ENCODE measurements at regions of chr3 and their contacts with region 1.

Region 1: DNA sequence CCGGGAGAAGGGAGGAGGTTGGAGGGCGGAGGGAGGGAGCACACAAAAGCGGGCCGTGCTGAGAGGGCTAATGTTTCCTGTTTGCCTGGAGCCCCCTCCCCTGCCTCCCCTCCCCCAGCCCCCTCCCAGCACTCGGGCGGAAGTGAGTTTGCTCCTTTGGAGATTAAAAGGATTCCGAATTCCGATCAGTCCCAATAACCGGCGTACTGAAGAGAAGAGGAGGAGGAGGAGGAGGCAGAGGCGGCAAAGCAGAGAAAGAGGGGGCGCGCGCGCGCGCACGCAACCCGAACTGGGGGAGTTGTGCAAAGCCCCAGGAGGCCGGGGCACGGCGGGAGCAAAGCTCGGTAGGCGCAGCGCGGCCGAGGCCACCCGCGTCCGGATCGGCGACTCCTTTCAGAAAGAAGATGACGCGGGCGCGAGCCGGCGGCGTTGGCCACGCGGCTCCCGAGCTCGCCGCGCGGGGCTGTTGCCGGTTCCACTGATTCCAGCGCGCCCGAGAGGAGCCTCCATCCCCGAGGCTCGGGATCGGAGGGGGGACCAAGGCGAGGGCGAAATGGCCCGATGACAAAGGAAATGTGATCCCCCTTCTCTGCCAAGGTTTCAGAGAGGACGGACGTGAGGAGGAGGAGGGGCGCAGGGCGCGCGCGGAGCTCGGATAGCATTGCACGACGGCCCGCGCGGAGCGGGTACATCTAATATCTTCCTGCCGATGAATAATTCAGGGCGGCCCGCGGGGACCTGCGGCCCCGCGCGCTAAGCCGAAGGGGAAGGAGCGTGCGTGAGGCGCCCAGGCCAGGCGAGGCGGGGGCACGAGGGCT is 1.1 kb upstream of the TRIM71 start:
- DNase-seq: peak; percentile 95
- ATAC-seq: peak; percentile 76
- H3K4me3 ChIP-seq: peak overlapping the region; percentile 94 to 98 (median 94)
- H3K27ac ChIP-seq: peak overlapping the region; percentile 99
- H3K4me1 ChIP-seq: peaks cover 35% of the 10 kb centered on the region
- H3K27me3 ChIP-seq: peaks cover 0 to 6% of the 10 kb centered on the region in 2 experiments; a peak in 1 of 5 replicates
- CTCF ChIP-seq: peak; percentile 22; the same call in 1 of the 2 replicates
- EP300 ChIP-seq: peak in 1 of 2 experiments; percentile 70; a peak in 2 of 4 replicates
- POLR2A ChIP-seq: peak; percentile 79 to 81
- RAD21 ChIP-seq: peak; percentile 55; the same call in 1 of the 2 replicates

Region 2: DNA sequence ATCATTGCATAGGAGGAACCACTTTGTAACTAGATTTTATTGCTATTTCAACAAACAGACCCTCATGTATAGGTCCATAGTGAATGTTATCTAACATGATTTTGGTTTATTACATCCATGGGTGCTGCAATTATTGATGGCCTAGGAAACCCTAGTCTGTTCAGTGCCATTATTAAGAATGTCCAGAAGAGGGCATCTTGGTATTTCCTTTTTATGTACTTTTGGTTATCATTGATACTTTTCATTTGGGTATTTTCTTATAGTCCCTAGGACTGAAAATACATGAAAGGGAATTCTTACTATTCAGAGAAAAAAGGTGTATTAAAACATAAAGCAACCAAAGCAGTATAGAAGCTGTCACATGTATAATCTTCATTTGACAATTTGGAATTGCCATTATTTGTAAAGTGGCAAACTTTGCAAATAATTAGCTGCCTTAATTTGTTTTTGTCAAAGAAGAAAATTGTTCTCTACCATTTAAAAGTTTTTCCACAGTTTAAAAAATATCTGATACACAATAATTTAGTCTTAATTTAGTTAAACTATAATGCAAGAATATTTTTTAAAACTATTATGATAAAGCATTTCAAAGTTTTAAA is 82.9 kb before region 1 on chr3:
- CTCF ChIA-PET with region 1: no interaction called
- POLR2A ChIA-PET with region 1: no interaction called
- in situ Hi-C with region 1: no loop called
- intact Hi-C with region 1: loop called (anchors 2 kb)
- DNase-seq: peak; percentile 62
- ATAC-seq: peak; percentile 54; the same call in 2 of the 3 replicates
- H3K4me3 ChIP-seq: no peak overlapping the region
- H3K27ac ChIP-seq: no peak overlapping the region
- H3K4me1 ChIP-seq: no peaks in the 10 kb centered on the region
- H3K27me3 ChIP-seq: no peaks in the 10 kb centered on the region
- CTCF ChIP-seq: peak; percentile 73
- EP300 ChIP-seq: no peak
- POLR2A ChIP-seq: no peak
- RAD21 ChIP-seq: peak; percentile 50; the same call in 1 of the 2 replicates

Region 3: GRCh38 chr3:32794487-32795308 is 21.9 kb before region 1 on chr3:
- CTCF ChIA-PET with region 1: no interaction called
- POLR2A ChIA-PET with region 1: interaction called, 16 read pairs
- in situ Hi-C with region 1: no loop called
- intact Hi-C with region 1: no loop called
- DNase-seq: peak; percentile 97
- ATAC-seq: peak; percentile 97
- H3K4me3 ChIP-seq: peak overlapping the region; percentile 4 to 53 (median 31); a peak in 5 of 6 replicates
- H3K27ac ChIP-seq: peak overlapping the region; percentile 87
- H3K4me1 ChIP-seq: peaks cover 54% of the 10 kb centered on the region
- H3K27me3 ChIP-seq: no peaks in the 10 kb centered on the region
- CTCF ChIP-seq: no peak
- EP300 ChIP-seq: peak; percentile 87 to 97; a peak in 3 of 4 replicates
- POLR2A ChIP-seq: 0 out of 4 replicates have a peak, but pooled peaks of 1 of the 2 experiments have one; percentile 14
- RAD21 ChIP-seq: no peak; the same call in 1 of the 2 replicates

Region 4: GRCh38 chr3:32842531-32842931 is 25.9 kb after region 1 on chr3:
- CTCF ChIA-PET with region 1: no interaction called
- POLR2A ChIA-PET with region 1: interaction called, 36 read pairs
- in situ Hi-C with region 1: no loop called
- intact Hi-C with region 1: no loop called
- DNase-seq: no peak
- ATAC-seq: no peak
- H3K4me3 ChIP-seq: peak overlapping the region in 1 of 3 experiments; percentile 29; a peak in 1 of 6 replicates
- H3K27ac ChIP-seq: peak overlapping the region; percentile 100
- H3K4me1 ChIP-seq: peaks cover 99% of the 10 kb centered on the region
- H3K27me3 ChIP-seq: no peaks in the 10 kb centered on the region
- CTCF ChIP-seq: no peak
- EP300 ChIP-seq: no peak
- POLR2A ChIP-seq: no peak
- RAD21 ChIP-seq: no peak